ENCODE measurements at regions of chr19 and their contacts with region 1.

Region 1: GRCh38 chr19:12757544-12758274 is 6.1 kb downstream of the BEST2 start:
- DNase-seq: peak; percentile 81
- ATAC-seq: peak; percentile 86

Region 2: DNA sequence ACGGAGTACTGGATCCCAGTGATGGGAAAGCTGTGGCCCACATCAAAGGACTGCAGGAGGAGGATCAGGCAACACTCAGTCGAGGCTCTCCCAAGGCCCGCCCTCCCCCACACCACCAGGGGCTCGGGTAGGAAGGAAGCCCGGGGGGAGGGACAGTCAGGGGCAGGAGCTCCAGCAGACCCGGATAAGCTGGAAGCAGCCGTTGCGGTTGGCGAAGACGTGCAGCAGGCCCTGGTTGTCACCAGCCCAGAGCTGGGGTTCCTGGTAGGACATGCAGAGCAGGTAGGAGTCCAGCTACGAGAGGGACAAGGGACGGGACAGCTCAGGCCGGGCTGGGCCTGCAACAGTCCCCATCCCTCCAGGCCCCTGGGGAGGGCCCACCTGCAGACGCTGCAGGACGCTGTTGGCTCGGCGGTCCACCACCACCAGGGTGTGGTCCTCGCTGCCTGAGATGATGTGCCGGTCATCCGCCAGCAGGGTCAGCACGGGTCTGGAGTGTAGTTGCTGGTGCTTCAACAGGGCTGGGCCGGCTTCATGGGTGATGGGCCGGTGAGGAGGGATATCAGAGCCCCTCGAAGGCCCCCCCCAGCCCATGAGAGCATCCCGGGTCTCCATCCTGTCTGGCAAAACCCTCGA is 68.0 kb before region 1 on chr19:
- intact Hi-C with region 1: no loop called
- DNase-seq: no peak
- ATAC-seq: no peak

Region 3: GRCh38 chr19:12711187-12711586 is 46.5 kb before region 1 on chr19:
- intact Hi-C with region 1: loop called (anchors 5 kb)
- DNase-seq: no peak
- ATAC-seq: no peak